Left cardiac atrium (tissue), 4 donors: ENCODE measurements at regions of chr15 and their contacts with region 1.

Region 1: GRCh38 chr15:80970018-80970658 is 19.5 kb downstream of the MESD start:
- DNase-seq: peak; percentile 55
- ATAC-seq: peak; percentile 59 to 72

Region 2: DNA sequence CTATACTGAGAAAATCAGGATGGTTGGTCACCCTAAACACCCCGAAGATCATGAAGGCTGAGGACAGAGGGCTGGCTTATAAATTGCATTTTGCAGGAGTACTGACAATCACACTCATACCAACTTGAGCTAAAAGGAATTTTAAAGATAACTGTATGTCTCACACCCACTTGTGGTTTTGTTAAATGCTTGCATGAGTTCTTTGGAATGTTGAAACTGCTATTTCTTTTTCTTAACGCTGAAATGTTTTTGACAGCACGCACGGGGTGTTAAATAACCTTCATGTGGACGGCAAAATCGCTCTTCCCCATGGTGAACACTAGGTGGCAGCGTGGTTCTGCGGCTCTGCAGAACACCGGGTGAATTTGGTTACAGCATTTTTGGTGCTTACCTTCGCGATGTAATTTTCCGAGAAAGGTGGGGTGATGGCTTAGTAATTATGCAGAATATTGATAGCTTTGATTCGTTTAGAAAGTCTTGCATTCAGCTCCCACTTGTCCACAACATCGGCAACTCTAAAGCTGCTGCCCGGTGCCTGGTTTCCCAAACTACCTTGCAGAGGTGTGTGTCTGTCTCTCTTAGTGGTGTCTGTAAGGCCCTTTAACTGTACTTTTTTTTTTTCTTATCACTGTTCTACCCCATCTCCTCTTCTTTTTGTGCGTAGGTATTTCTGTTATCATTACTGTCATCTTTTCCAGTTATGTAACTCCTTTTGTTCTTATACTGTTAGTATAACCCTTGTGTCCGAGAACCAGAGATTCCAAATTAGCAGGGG is 514.3 kb before region 1 on chr15:
- intact Hi-C with region 1: loop called (anchors 5 to 10 kb)
- DNase-seq: peak; percentile 42
- ATAC-seq: peak; percentile 79 to 81

Region 3: GRCh38 chr15:80915472-80915871 is 54.7 kb before region 1 on chr15:
- intact Hi-C with region 1: no loop called
- DNase-seq: no peak
- ATAC-seq: no peak

Region 4: GRCh38 chr15:81023483-81024264 is 53.5 kb after region 1 on chr15:
- intact Hi-C with region 1: no loop called
- DNase-seq: peak; percentile 84
- ATAC-seq: peak; percentile 95 to 96

Region 5: DNA sequence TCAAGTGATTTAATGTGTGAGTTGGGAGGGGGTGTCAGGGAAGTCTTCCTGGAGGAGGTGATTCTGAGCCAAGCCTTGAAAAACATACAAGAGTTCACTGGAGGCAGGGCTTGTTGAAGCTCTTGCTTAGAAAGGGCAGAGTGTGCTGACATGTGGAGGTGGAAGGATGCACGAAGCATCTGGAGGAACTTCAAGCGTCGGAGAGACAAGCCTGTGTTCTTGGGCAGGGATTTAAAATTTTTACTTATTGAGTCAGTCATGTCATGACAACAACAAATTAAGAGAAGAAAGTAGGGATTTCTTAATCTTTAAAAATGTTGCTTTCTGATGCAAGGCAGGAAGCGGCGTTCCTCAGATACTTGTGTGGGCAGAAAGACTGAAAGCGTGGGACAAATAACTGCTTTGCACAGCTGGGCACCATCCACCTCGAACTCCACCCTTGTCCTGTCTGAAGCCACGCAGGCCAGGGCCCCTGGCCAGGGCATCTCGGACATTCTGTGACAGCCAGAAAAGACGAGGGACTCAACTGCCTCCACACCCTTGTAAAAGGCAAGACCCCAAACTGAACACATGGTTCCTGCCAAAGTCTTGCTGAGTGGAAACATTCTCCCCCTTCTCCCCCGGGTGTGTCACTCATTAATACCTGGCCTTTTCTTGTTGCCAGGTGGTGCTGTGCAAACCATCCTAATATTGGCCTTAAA is 219.6 kb after region 1 on chr15:
- intact Hi-C with region 1: no loop called
- DNase-seq: peak; percentile 78
- ATAC-seq: peak; percentile 87 to 94